Activated naive CD4-positive, alpha-beta T cell treated with anti-CD3 and anti-CD28 coated beads, Interleukin-2, amount 10 ng/mL, durations not matched to agents 7 days and 5 days (primary cell): ENCODE measurements at regions of chr3 and their contacts with region 1.

Region 1: DNA sequence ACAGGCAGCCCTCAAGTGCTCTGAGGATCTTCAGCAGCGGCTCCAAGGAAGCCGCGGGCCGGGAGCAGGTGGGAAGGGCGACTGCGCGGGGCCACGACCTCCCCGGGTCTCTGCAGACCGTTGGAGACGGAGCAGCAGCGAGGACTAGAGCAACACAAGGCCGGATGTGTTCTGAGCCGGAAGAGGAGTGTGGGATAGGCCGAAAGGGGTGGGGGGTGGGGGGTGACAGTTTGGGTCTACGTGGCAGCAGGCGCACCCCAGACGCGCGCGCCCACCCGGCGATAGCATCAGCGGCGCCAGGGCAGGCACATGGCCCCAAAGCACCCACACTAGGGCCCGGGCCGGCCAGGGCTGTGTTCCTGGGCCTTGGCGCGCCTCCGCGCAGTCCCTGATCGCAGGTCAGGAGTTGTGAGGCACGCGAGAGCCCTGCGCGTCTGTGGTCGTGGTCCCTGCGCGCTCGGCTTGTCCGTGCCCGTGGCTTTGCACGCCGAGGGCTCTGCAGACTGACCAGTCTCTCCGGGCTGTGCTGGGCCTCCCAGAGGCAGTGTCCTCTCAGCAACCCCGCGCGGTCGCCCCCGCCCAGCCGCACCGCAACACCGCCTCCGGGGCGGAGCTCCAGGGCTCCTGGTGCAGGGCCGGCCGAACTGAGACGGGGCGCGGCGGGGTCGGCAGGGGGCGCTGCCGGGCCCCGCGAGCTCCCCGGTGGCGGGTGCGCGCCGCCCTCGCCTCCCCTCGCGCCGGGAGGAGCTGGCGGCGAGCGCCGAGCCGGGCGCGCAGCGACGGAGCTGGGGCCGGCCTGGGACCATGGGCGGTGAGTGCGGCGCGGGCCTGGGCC is at the start of gene PXYLP1:
- DNase-seq: peak; percentile 92
- H3K4me3 Mint-ChIP-seq: peak within 1 kb of the TSS; percentile 81
- H3K27ac Mint-ChIP-seq: peak within 1 kb of the TSS; percentile 93
- H3K4me1 Mint-ChIP-seq: peaks cover 54% of the 10 kb centered on the region
- H3K27me3 Mint-ChIP-seq: peaks cover 31% of the 10 kb centered on the region

Region 2: DNA sequence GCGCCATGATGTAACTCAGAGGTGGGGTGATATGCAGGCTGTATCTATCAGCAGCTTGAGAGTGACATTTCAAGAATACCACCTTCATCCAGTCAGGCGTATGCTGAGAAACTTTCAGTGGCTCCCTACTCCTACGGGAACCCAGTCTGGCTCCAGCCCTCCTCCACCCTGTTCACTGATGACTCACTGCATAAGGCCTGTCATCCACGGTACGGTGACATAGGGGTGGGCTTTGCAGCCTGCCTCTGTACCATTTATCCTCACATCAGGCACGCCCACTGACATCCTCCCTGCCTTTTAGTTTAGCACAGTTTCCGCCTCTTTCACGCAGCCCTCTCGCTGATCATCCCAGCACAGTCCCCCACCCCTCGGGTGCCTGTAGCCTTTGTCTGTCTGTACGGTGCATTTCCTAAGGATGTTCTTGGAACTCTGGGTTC is 12.0 kb after region 1 on chr3:
- CTCF ChIA-PET with region 1: interaction called, 29 read pairs
- DNase-seq: peak; percentile 71
- H3K4me3 Mint-ChIP-seq: no peak overlapping the region
- H3K27ac Mint-ChIP-seq: peak overlapping the region; percentile 72
- H3K4me1 Mint-ChIP-seq: peaks cover 35% of the 10 kb centered on the region
- H3K27me3 Mint-ChIP-seq: no peaks in the 10 kb centered on the region

Region 3: DNA sequence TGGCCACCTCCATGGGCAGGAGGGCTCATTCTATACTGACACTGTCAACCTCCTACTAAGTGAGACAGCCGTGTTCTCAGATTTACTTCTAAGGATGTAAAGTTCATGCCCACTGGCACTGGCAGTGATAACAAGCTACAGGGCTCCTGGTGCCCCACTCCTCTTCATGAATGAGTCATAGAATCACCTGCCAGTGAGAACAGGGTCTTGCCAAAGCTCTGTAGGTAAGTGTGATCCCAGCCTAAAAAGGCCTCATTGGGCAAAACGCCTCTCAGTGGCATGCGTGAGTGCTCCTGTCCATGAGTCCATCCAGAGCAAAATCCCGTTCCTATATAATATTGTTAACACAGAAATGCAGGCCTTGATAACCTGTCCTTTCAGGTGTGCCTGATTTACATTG is 17.7 kb after region 1 on chr3:
- CTCF ChIA-PET with region 1: interaction called, 67 read pairs
- DNase-seq: no peak
- H3K4me3 Mint-ChIP-seq: no peak overlapping the region
- H3K27ac Mint-ChIP-seq: no peak overlapping the region
- H3K4me1 Mint-ChIP-seq: peaks cover 2% of the 10 kb centered on the region
- H3K27me3 Mint-ChIP-seq: no peaks in the 10 kb centered on the region

Region 4: GRCh38 chr3:141255846-141256261 is 24.5 kb after region 1 on chr3:
- CTCF ChIA-PET with region 1: interaction called, 67 read pairs
- DNase-seq: peak; percentile 63
- H3K4me3 Mint-ChIP-seq: no peak overlapping the region
- H3K27ac Mint-ChIP-seq: no peak overlapping the region
- H3K4me1 Mint-ChIP-seq: peaks cover 19% of the 10 kb centered on the region
- H3K27me3 Mint-ChIP-seq: no peaks in the 10 kb centered on the region

Region 5: DNA sequence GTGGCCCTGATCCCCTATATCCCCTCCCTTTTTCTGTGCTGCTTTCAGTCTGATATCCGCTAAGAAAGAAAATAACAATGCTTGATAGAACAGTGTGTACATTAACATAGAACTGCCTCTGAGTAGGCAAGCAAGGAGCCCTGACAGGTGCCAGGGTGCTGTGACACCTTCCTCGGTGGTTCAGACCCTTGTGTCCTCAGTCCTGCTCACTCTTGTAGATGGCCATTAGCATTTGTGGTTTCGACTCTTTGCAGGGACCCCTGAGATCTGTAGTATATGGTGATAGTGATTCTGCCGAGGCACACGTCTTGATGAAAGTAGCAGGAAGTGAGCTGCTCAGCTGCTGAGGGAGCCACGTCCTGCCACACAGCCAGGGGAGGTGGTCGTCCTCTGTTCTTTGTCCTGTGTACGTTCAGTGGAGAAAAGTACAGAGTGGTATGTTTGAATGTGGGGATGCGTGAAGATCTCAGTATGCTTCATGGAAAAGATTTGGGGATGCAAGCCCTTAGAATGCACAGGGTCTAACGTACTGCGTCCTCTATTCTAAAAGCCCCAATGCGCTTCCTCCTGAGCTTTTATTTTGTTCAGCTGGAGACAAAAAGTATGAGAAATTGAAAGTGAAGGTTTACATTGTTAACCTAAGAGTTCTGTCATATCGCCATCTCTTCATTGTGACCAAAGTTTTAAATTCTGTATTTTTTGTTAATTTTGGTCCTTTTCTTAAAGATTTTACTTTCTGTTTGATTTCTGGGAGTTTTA is 35.7 kb after region 1 on chr3:
- CTCF ChIA-PET with region 1: interaction called, 23 read pairs
- DNase-seq: peak; percentile 67
- H3K4me3 Mint-ChIP-seq: peak overlapping the region; percentile 72
- H3K27ac Mint-ChIP-seq: peak overlapping the region; percentile 96
- H3K4me1 Mint-ChIP-seq: peaks cover 42% of the 10 kb centered on the region
- H3K27me3 Mint-ChIP-seq: no peaks in the 10 kb centered on the region

Region 6: DNA sequence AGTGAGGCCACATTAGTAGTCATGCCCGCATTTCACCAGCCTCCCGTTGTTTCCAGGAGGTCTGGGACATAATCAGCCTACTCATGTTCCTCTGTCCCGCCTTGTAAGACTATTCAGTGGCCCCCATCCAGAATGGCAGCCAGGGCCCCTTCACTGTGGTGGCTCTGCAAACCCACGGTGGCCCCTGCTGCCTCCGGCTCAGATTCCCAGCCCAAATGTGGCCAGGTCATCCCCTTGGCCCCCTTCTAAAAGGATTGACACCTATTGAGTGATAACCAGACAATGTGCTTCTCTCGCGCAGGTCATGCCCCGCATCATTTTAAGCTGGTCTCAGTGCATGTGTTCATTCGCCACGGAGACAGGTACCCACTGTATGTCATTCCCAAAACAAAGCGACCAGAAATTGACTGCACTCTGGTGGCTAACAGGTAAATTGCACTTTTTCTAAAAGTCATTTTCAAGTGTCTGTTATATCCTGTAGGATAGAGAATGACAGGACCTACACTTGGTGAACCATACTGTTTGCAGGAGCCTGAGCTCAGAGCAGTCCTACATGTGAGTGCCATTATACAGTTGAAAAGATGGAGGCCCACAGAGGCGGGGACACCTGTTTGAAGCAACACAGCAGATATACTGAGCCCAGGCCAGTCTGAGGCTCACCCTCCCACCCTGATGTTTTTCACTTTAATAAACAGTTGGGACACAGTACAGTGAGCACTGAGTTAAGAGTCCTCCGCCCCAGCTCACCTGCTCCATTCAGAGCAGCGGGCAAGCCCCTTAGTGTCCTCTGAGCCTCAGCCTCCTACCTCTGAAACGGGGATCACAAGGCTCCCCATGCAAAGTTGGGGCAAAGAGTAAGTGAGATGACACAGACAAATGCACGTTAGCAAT is 48.0 kb after region 1 on chr3:
- CTCF ChIA-PET with region 1: interaction called, 78 read pairs
- DNase-seq: no peak
- H3K4me3 Mint-ChIP-seq: no peak overlapping the region
- H3K27ac Mint-ChIP-seq: no peak overlapping the region
- H3K4me1 Mint-ChIP-seq: peaks cover 21% of the 10 kb centered on the region
- H3K27me3 Mint-ChIP-seq: no peaks in the 10 kb centered on the region

Region 7: GRCh38 chr3:141303481-141304223 is 72.3 kb after region 1 on chr3:
- CTCF ChIA-PET with region 1: interaction called, 26 read pairs
- DNase-seq: peak; percentile 71
- H3K4me3 Mint-ChIP-seq: no peak overlapping the region
- H3K27ac Mint-ChIP-seq: no peak overlapping the region
- H3K4me1 Mint-ChIP-seq: peaks cover 58% of the 10 kb centered on the region
- H3K27me3 Mint-ChIP-seq: peaks cover 3% of the 10 kb centered on the region